ENCODE measurements at regions of chr15 and their contacts with region 1.

Region 1: GRCh38 chr15:48285329-48286214 is 45.7 kb upstream of the DUT start:
- DNase-seq: peak; percentile 53
- CTCF ChIP-seq: peak; percentile 54

Region 2: GRCh38 chr15:48144889-48145288 is 140.7 kb before region 1 on chr15:
- CTCF ChIA-PET with region 1: no interaction called
- POLR2A ChIA-PET with region 1: no interaction called
- DNase-seq: no peak
- CTCF ChIP-seq: no peak

Region 3: GRCh38 chr15:48177766-48178647 is 107.6 kb before region 1 on chr15 and contains the start of gene MYEF2:
- CTCF ChIA-PET with region 1: no interaction called
- POLR2A ChIA-PET with region 1: no interaction called
- DNase-seq: peak; percentile 84
- CTCF ChIP-seq: no peak

Region 4: DNA sequence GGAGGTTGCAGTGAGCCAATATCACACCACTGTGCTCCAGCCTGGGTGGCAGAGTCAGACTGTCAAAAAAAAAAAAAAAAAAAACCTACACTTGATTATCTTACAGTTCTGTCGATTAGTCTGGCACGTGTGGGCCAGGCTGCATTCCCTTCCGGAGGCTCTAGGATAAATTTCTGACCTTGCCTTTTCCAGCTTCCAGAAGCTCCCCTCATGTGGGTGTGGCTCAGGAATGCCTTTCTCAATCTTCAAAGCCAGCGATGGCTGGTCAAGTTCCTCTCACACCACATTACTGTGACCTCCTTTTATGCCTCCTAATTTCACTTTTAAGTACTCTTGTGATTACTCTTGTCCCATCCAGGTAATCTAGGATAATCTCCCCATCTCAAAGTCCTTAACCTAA is 12.5 kb before region 1 on chr15:
- CTCF ChIA-PET with region 1: interaction called, 10 read pairs
- POLR2A ChIA-PET with region 1: no interaction called
- DNase-seq: no peak
- CTCF ChIP-seq: no peak

Region 5: GRCh38 chr15:48298914-48299313 is 13.3 kb after region 1 on chr15:
- CTCF ChIA-PET with region 1: interaction called, 18 read pairs
- POLR2A ChIA-PET with region 1: no interaction called
- DNase-seq: no peak
- CTCF ChIP-seq: no peak

Measured in GM10248 (cell line).